Endothelial cell of umbilical vein (primary cell): ENCODE measurements at regions of chr12 and their contacts with region 1.

Region 1: DNA sequence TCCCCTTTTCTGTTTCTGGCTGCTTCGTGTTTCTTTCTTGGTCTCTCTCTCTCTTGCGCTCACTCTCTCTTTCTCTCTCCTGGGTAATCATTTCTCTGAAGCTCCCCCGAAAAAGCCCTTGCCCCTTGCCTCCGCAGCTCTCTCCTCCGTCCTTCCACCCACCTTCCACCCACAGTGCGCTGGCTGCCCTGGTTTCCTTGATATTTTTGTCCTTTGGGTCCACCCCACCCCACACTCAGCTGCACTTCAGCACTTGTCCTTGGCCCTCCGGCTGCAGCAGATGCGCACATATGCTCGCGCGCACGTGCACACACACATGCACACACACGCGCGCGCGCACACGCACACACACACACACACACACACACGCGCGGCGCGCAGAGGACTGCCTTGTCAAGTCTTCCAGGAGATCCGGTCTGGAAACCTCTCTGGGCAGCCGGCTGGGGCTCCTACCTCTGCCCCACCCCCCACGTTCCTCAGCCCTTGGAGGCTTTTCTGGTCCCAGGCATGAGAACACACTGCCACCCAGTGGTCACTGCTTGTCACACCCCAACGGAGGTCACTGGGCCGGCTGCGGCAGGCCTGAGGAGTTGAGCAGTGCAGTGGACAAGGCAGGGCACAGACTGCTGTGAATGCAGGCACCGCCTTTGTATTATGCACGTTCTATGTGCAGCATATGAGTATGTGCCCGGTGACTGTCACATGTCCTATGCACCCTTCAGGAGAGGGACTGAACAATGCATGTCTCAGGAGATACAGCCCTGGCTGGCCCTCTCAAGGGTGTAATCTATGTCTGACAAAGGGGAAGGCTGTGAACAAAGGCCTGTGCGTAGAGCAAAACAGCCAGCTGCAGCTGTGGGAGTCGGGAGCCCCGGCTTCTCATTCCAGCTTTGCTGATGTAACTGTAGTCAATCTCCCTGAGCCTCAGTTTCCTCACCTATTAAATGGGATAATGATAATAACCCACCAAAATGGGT is 6.5 kb downstream of the LAG3 start:
- DNase-seq: peak; percentile 94
- H3K4me3 ChIP-seq: peak overlapping the region in 1 of 3 experiments; percentile 6
- H3K27ac ChIP-seq: no peak overlapping the region
- H3K4me1 ChIP-seq: peaks cover 5% of the 10 kb centered on the region
- H3K27me3 ChIP-seq: no peaks in the 10 kb centered on the region
- CTCF ChIP-seq: peak; percentile 93 to 95
- POLR2A ChIP-seq: peak; percentile 22

Region 2: GRCh38 chr12:6813363-6813762 is 34.5 kb after region 1 on chr12:
- CTCF ChIA-PET with region 1: no interaction called
- POLR2A ChIA-PET with region 1: no interaction called
- dilution Hi-C with region 1: no loop called
- intact Hi-C with region 1: no loop called
- DNase-seq: no peak
- H3K4me3 ChIP-seq: no peak overlapping the region
- H3K27ac ChIP-seq: no peak overlapping the region
- H3K4me1 ChIP-seq: no peaks in the 10 kb centered on the region
- H3K27me3 ChIP-seq: peaks cover 0 to 11% of the 10 kb centered on the region in 2 experiments
- CTCF ChIP-seq: no peak
- POLR2A ChIP-seq: no peak

Region 3: GRCh38 chr12:6825398-6826124 is 46.7 kb after region 1 on chr12:
- CTCF ChIA-PET with region 1: interaction called, 10 read pairs
- POLR2A ChIA-PET with region 1: no interaction called
- dilution Hi-C with region 1: no loop called
- intact Hi-C with region 1: loop called (anchors 1 kb)
- DNase-seq: peak; percentile 87
- H3K4me3 ChIP-seq: no peak overlapping the region
- H3K27ac ChIP-seq: no peak overlapping the region
- H3K4me1 ChIP-seq: peaks cover 23% of the 10 kb centered on the region
- H3K27me3 ChIP-seq: peaks cover 3% of the 10 kb centered on the region in 2 experiments
- CTCF ChIP-seq: peak; percentile 95
- POLR2A ChIP-seq: no peak